ENCODE measurements at regions of chr7 and their contacts with region 1.

Region 1: GRCh38 chr7:6447581-6448199 is at the start of gene DAGLB:
- DNase-seq: peak; percentile 96
- H3K4me3 Mint-ChIP-seq: peak within 1 kb of the TSS; percentile 94
- H3K27ac Mint-ChIP-seq: peak within 1 kb of the TSS; percentile 90
- H3K4me1 Mint-ChIP-seq: peaks cover 29% of the 10 kb centered on the region
- H3K27me3 Mint-ChIP-seq: no peaks in the 10 kb centered on the region
- total RNA-seq, gene DAGLB: 20.3 and 22.8 TPM in 2 replicates

Region 2: DNA sequence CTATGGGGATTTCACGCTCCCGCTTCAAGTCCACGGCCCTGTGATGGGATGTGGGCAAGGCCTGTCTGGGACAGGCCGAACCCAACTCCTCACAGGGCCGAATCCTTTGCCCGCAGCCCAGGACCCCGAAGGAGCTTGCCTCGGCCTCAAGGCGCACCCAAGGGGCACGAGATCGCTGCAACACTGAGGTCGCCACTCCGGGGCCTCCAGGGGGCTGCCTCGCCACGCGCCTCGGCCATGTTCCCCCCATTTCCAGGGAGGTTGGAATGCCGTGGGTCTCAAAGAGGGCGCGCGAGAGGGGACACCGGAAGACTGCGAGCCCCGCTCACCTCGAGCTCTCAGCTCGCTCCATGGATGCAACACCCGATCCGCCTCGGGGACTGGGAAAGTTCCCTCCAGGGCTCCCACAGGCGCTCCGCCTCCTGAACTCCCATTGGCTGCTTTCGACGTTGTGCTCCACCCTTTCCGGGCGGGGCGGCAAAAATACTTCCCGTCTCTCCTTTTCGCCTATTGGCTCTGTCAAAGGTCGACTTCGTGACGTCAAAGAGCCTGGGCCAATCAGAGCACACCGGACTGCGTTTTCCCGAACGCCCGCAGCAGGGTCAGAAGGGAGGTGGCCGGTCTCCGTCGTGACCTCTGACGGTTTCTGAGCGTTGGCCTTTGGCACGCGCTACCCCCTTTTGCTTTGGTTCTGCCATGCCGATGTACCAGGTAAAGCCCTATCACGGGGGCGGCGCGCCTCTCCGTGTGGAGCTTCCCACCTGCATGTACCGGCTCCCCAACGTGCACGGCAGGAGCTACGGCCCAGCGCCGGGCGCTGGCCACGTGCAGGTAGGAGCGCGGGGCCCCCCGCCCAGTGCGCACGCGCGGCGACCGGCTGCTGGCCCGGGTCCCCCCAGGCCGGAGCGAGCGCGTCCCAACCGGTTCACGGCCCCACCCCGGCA is 438.8 kb before region 1 on chr7 and contains the starts of genes AIMP2 and PMS2:
- intact Hi-C with region 1: loop called (anchors 5 kb)
- DNase-seq: peak; percentile 97
- H3K4me3 Mint-ChIP-seq: peak within 1 kb of the TSS; percentile 89
- H3K27ac Mint-ChIP-seq: peak within 1 kb of the TSS; percentile 91
- H3K4me1 Mint-ChIP-seq: peaks cover 18% of the 10 kb centered on the region
- H3K27me3 Mint-ChIP-seq: no peaks in the 10 kb centered on the region
- total RNA-seq, gene AIMP2: 92.0 and 101 TPM in 2 replicates
- total RNA-seq, gene PMS2: 20.3 and 25.8 TPM in 2 replicates

Region 3: DNA sequence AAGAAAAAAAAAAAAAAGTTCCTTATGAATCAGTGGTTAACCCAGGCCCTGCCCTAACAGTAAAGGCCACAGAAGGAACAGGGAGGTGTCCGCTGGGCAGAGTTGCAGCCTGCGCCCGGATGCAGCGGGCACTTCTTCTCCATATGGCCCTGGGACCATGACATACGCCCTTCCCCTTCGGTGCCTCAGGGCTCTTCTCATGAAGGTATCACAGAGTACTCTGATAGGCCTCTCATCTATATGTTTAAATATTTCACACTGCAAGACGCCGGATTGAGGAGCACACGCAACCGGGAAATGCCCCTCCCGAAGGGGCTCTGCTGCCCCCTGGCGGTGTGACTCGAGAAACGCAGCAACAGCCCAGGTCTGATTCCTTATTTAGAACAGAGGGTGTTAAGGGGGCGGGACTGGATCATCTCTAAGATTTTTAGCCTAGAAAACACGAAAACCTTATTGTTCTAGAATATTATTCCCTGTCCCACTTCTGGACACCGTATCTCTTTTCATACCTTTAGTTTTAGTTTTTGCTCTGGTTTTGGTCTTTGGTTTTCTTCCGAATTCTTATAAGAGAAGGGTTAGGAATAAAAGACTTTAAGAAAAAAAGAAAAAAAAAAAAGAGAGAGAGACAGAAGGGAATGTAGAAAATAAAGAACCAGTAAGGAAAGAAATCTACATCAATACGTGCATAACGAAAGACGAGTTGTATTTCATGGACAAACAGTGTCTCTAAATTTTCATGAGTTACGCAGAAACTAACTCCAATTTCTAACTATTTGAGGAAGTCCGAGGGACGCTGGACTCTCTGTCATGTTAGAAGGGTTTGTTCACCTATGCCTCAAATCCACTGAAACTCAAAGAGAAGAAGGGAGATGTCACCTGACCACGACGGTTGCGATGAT is 12.0 kb before region 1 on chr7:
- intact Hi-C with region 1: loop called (anchors 1 kb)
- DNase-seq: peak; percentile 80
- H3K4me3 Mint-ChIP-seq: peak overlapping the region; percentile 71
- H3K27ac Mint-ChIP-seq: peak overlapping the region; percentile 83
- H3K4me1 Mint-ChIP-seq: peaks cover 36% of the 10 kb centered on the region
- H3K27me3 Mint-ChIP-seq: no peaks in the 10 kb centered on the region

Region 4: DNA sequence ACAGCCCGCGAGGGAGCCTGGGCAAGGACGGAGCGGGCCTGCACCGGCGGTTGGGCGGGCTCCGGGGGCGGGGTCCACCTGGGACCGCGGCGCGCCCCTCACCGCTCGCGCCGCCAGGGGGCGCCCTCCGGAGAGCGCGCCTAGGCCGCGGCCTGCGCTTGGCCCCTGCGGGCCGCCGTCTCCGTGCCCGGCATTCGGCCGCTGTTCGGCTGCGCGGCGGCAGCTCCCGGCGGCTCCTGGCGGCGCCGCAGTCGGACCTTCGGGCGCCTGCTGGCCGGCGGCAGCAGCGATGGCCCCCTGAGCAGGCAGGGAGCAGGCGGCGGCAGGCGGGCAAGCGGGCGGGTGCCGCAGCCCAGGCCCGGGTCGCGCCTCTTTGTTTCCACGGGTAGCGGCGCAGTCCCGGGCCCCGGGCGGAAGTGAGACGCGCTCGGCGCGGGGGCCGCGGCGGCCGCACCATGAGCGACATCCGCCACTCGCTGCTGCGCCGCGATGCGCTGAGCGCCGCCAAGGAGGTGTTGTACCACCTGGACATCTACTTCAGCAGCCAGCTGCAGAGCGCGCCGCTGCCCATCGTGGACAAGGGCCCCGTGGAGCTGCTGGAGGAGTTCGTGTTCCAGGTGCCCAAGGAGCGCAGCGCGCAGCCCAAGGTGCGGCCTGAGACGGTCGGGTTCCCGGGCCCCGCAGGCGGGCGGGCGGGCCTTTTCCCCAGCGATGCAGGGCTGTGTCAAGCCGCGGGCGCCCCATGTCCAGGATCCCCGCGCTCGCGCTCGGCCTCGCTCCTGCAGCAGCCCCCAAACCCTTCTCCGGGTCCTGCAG is 142.3 kb after region 1 on chr7 and contains the start of gene INTS15:
- intact Hi-C with region 1: loop called (anchors 2 kb)
- DNase-seq: peak; percentile 78
- H3K4me3 Mint-ChIP-seq: peak within 1 kb of the TSS; percentile 88
- H3K27ac Mint-ChIP-seq: peak within 1 kb of the TSS; percentile 85
- H3K4me1 Mint-ChIP-seq: peaks cover 8% of the 10 kb centered on the region
- H3K27me3 Mint-ChIP-seq: no peaks in the 10 kb centered on the region
- total RNA-seq, gene INTS15: 44.6 and 46.6 TPM in 2 replicates